Activated CD8-positive, alpha-beta T cell treated with anti-CD3 and anti-CD28 coated beads for 36 hours (primary cell): ENCODE measurements at regions of chr7 and their contacts with region 1.

Region 1: DNA sequence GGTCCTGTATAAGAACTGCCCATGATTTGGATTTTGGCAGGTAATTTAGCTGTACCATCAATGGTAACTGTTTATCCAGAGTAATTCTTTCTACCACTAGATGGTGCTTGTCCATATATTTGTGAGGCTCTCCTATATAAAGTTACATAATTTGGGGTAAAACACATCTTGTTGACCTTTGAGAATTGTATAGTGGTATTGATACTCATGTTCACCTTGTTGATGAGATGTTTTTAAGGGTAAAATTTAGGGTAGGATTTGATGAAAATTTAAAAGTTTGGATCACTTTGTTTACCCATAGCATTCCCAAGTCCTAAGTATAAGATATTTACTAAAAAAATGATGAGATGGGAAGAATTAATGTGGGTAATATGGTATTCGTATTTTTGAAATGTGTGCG is 31.6 kb downstream of the ST7 start:
- DNase-seq: no peak
- ATAC-seq: peak; percentile 69
- H3K4me3 Mint-ChIP-seq: no peak overlapping the region
- H3K27ac Mint-ChIP-seq: no peak overlapping the region
- H3K4me1 Mint-ChIP-seq: peaks cover 7% of the 10 kb centered on the region
- H3K27me3 Mint-ChIP-seq: no peaks in the 10 kb centered on the region
- CTCF ChIP-seq: peak; percentile 71

Region 2: GRCh38 chr7:116971869-116972268 is 13.0 kb before region 1 on chr7:
- CTCF ChIA-PET with region 1: interaction called, 18 read pairs
- POLR2A ChIA-PET with region 1: no interaction called
- intact Hi-C with region 1: no loop called
- DNase-seq: no peak
- ATAC-seq: no peak
- H3K4me3 Mint-ChIP-seq: no peak overlapping the region
- H3K27ac Mint-ChIP-seq: no peak overlapping the region
- H3K4me1 Mint-ChIP-seq: peaks cover 10% of the 10 kb centered on the region
- H3K27me3 Mint-ChIP-seq: no peaks in the 10 kb centered on the region
- CTCF ChIP-seq: no peak

Region 3: GRCh38 chr7:116999311-116999710 is 14.4 kb after region 1 on chr7:
- CTCF ChIA-PET with region 1: interaction called, 146 read pairs
- POLR2A ChIA-PET with region 1: interaction called, 3 read pairs
- intact Hi-C with region 1: no loop called
- DNase-seq: no peak
- ATAC-seq: no peak
- H3K4me3 Mint-ChIP-seq: no peak overlapping the region
- H3K27ac Mint-ChIP-seq: no peak overlapping the region
- H3K4me1 Mint-ChIP-seq: no peaks in the 10 kb centered on the region
- H3K27me3 Mint-ChIP-seq: no peaks in the 10 kb centered on the region
- CTCF ChIP-seq: no peak

Region 4: DNA sequence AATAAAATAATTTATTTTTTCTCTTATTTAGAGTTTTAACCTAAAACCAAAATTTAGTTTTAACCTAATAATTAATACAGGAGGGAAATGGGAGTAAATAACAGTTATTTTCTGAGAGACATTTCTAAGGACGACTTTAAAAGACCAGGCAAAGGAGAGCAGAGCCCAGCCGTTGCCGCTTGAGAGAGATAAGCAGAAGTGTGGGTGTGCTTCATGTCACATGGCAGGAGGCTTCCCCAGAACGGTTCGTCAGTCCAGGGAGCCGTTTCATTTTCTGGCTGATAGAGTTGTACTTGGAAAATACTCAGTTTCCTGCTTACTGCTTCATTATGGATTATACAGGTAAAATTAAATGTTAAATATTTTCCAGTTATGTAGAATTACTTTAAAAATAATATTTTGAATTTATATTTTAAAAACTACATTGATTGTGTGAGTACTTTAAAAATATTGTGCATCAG is 29.8 kb after region 1 on chr7:
- CTCF ChIA-PET with region 1: interaction called, 146 read pairs
- POLR2A ChIA-PET with region 1: no interaction called
- intact Hi-C with region 1: no loop called
- DNase-seq: peak; percentile 62
- ATAC-seq: no peak
- H3K4me3 Mint-ChIP-seq: peak overlapping the region; percentile 15
- H3K27ac Mint-ChIP-seq: no peak overlapping the region
- H3K4me1 Mint-ChIP-seq: peaks cover 62% of the 10 kb centered on the region
- H3K27me3 Mint-ChIP-seq: peaks cover 2% of the 10 kb centered on the region
- CTCF ChIP-seq: no peak

Region 5: GRCh38 chr7:117110480-117111337 is 125.8 kb after region 1 on chr7:
- CTCF ChIA-PET with region 1: interaction called, 307 read pairs
- POLR2A ChIA-PET with region 1: no interaction called
- intact Hi-C with region 1: loop called (anchors 5 kb)
- DNase-seq: peak; percentile 77
- ATAC-seq: peak; percentile 97
- H3K4me3 Mint-ChIP-seq: peak overlapping the region; percentile 60
- H3K27ac Mint-ChIP-seq: peak overlapping the region; percentile 93
- H3K4me1 Mint-ChIP-seq: peaks cover 36% of the 10 kb centered on the region
- H3K27me3 Mint-ChIP-seq: no peaks in the 10 kb centered on the region
- CTCF ChIP-seq: no peak

Region 6: GRCh38 chr7:117119192-117119924 is 134.4 kb after region 1 on chr7:
- CTCF ChIA-PET with region 1: interaction called, 307 read pairs
- POLR2A ChIA-PET with region 1: interaction called, 5 read pairs
- intact Hi-C with region 1: loop called (anchors 5 kb)
- DNase-seq: peak; percentile 85
- ATAC-seq: no peak
- H3K4me3 Mint-ChIP-seq: no peak overlapping the region
- H3K27ac Mint-ChIP-seq: no peak overlapping the region
- H3K4me1 Mint-ChIP-seq: peaks cover 2% of the 10 kb centered on the region
- H3K27me3 Mint-ChIP-seq: no peaks in the 10 kb centered on the region
- CTCF ChIP-seq: peak; percentile 97

Region 7: DNA sequence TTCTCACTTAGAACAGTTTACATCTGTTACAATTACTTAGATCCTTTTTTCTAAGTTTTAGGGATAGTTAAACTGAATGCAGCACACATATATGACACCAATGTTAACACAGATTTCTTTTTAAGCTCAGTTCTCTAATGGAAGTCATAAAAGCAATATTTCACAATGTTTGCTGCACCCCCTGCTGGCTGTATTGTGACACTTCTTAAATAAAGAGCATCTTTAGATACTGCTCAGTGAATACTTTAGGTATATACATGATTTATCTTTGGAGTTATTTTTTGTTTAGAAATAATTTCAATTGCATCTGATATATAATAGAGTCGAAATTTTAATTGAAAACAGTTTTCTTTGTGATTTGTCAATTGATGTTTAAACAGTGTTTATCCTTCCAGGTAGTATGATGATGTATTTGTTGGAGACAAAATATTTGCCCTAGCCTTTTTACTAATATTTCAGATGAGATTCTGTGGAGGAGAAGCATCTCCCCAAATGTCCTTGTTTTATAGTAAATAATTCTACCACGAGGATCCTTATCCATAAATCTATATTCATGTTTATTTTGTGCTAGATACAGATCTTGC is 142.8 kb after region 1 on chr7:
- CTCF ChIA-PET with region 1: interaction called, 307 read pairs
- POLR2A ChIA-PET with region 1: interaction called, 5 read pairs
- intact Hi-C with region 1: no loop called
- DNase-seq: peak; percentile 75
- ATAC-seq: peak; percentile 29
- H3K4me3 Mint-ChIP-seq: no peak overlapping the region
- H3K27ac Mint-ChIP-seq: no peak overlapping the region
- H3K4me1 Mint-ChIP-seq: peaks cover 12% of the 10 kb centered on the region
- H3K27me3 Mint-ChIP-seq: no peaks in the 10 kb centered on the region
- CTCF ChIP-seq: peak; percentile 97